ENCODE measurements at regions of chr1 and their contacts with region 1.

Region 1: DNA sequence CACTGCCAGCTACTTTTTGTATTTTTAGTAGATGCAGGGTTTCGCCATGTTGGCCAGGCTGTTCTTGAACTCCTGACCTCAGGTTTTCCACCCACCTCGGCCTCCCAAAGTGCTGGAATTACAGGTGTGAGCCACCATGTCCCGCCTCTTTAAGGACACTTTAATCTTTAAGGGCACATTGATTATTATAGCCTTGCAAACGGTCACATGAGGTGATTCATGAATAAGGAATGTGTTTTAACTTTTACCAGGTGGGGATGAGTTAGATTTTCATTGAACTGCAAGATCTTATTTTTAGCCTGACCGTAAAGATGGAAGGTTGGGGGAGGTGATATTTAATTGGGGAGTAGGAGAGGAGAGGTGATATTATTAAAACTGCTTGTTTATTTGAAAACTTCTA is 61.9 kb downstream of the TBCE start:
- DNase-seq: no peak
- H3K4me3 ChIP-seq: no peak overlapping the region
- H3K27ac ChIP-seq: no peak overlapping the region
- H3K4me1 ChIP-seq: no peaks in the 10 kb centered on the region
- H3K27me3 ChIP-seq: no peaks in the 10 kb centered on the region
- CTCF ChIP-seq: no peak
- EP300 ChIP-seq: no peak
- POLR2A ChIP-seq: no peak

Region 2: DNA sequence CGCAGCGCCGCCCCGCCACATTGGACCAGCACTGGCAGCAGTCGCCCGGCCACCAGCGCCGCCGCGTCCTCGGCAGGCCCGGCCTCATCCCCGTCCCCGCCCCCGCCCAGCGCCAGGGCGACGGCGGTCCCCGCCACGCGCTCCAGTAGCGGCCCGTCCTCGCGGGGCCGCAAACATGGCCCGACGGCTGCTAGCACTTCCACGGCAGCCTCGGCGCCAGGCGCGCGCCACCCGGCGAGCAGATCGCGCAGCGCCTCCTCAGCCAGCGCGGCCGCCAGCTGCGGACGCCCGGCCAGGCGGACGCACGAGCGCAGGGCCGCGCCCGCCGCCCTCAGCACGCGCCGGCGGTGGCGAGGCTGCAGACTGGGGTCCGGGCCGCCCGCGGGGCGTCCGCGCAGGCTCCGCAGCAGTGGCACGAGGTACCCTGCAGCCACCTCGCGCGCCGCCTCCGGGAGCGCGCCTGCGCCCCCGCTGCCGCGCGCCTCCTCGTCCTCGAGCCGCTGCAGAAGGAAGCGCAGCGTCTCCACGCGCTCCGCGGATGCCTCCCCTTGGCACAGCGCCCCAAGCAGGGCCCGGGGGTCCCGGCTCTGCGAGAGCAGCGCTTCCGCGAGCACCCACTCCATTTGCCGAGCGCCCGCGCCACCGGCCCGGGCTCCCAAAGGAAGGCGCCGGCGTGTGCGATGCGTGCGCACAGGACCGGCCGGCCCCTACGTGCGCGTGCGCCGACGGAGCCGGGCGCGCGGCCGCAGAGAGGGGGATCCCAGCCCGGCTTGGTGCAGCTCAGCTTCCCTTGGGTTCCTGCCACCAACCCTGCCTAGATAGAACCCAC is 950.4 kb before region 1 on chr1 and contains the start of gene TARBP1:
- intact Hi-C with region 1: loop called in 1 of 4 experiments (anchors 5 kb)
- DNase-seq: peak; percentile 33 to 80 (median 61)
- H3K4me3 ChIP-seq: peak within 1 kb of the TSS; percentile 63
- H3K27ac ChIP-seq: peak within 1 kb of the TSS; percentile 56 to 77
- H3K4me1 ChIP-seq: peaks cover 2% of the 10 kb centered on the region
- H3K27me3 ChIP-seq: no peaks in the 10 kb centered on the region
- CTCF ChIP-seq: peak in 1 of 3 donors; percentile 5
- EP300 ChIP-seq: no peak
- POLR2A ChIP-seq: no peak
- total RNA-seq, gene TARBP1: 5.5 to 26.3 (median 10.8) TPM

Measured in ovary (tissue), 10 donors.